Activated naive CD4-positive, alpha-beta T cell treated with anti-CD3 and anti-CD28 coated beads, Interleukin-2, amount 10 ng/mL, durations not matched to agents 7 days and 5 days (primary cell): ENCODE measurements at regions of chr1 and their contacts with region 1.

Region 1: GRCh38 chr1:26993237-26994019 is at the start of gene TRNP1:
- DNase-seq: peak; percentile 81
- H3K4me3 Mint-ChIP-seq: peak within 1 kb of the TSS; percentile 70
- H3K27ac Mint-ChIP-seq: peak within 1 kb of the TSS; percentile 19
- H3K4me1 Mint-ChIP-seq: peaks cover 22% of the 10 kb centered on the region
- H3K27me3 Mint-ChIP-seq: peaks cover 97% of the 10 kb centered on the region

Region 2: GRCh38 chr1:26083246-26083645 is 910.2 kb before region 1 on chr1:
- CTCF ChIA-PET with region 1: no interaction called
- DNase-seq: no peak
- H3K4me3 Mint-ChIP-seq: no peak overlapping the region
- H3K27ac Mint-ChIP-seq: no peak overlapping the region
- H3K4me1 Mint-ChIP-seq: no peaks in the 10 kb centered on the region
- H3K27me3 Mint-ChIP-seq: peaks cover 72% of the 10 kb centered on the region

Region 3: GRCh38 chr1:26961826-26962225 is 31.6 kb before region 1 on chr1:
- CTCF ChIA-PET with region 1: interaction called, 14 read pairs
- DNase-seq: no peak
- H3K4me3 Mint-ChIP-seq: no peak overlapping the region
- H3K27ac Mint-ChIP-seq: no peak overlapping the region
- H3K4me1 Mint-ChIP-seq: peaks cover 13% of the 10 kb centered on the region
- H3K27me3 Mint-ChIP-seq: peaks cover 78% of the 10 kb centered on the region

Region 4: DNA sequence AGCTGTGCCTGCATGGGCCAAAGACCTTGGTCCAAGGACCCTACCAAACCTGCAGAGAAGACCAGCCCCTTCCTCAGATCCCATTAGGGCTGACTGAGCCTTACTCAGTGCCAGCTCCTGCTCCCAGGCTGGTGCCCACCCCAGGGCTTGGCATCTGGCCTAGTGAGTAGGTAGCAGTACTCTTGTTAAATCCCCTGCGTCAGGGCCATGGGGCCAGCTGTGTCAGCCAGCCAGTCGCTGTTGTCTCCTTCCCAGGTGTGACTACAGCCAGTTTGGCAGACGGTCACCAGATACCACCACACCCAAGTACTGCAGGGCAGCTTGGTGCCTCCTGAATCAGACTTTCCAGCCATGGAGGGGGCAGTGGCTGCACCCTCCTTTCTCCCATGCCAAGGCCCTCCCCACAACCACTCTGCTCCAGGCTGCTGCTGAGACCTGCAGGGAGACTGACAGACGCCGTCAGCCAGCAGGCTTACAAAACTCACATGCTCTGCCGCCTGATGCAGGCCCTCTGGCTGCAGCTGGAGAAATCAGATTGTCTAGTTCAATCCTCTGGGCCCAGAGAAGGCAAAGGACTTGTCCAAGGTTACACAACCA is 16.3 kb after region 1 on chr1:
- CTCF ChIA-PET with region 1: interaction called, 21 read pairs
- DNase-seq: no peak
- H3K4me3 Mint-ChIP-seq: no peak overlapping the region
- H3K27ac Mint-ChIP-seq: no peak overlapping the region
- H3K4me1 Mint-ChIP-seq: peaks cover 4% of the 10 kb centered on the region
- H3K27me3 Mint-ChIP-seq: peaks cover 71% of the 10 kb centered on the region

Region 5: DNA sequence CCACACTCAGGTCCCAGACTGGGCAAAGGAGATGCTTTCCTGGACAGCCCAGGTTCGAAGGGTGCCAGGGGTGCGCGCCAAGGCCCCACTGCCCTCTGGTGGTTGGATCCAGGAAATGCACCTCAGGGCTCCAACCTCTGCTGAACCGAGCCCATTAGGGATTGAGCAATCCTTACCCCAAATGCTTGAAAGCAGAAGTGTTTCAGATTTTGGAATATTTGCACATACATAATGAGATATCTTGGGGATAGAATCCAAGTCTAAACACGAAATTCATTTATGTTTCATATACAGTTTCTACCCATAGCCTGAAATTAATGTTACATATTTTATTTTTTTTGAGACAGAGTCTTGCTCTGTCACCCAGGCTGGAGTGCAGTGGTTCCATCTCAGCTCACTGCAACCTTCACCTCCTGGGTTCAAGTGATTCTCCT is 104.1 kb after region 1 on chr1:
- CTCF ChIA-PET with region 1: interaction called, 19 read pairs
- DNase-seq: peak; percentile 82
- H3K4me3 Mint-ChIP-seq: no peak overlapping the region
- H3K27ac Mint-ChIP-seq: peak overlapping the region; percentile 6
- H3K4me1 Mint-ChIP-seq: peaks cover 5% of the 10 kb centered on the region
- H3K27me3 Mint-ChIP-seq: peaks cover 4% of the 10 kb centered on the region